Right cardiac atrium (tissue), 5 donors: ENCODE measurements at regions of chr9 and their contacts with region 1.

Region 1: DNA sequence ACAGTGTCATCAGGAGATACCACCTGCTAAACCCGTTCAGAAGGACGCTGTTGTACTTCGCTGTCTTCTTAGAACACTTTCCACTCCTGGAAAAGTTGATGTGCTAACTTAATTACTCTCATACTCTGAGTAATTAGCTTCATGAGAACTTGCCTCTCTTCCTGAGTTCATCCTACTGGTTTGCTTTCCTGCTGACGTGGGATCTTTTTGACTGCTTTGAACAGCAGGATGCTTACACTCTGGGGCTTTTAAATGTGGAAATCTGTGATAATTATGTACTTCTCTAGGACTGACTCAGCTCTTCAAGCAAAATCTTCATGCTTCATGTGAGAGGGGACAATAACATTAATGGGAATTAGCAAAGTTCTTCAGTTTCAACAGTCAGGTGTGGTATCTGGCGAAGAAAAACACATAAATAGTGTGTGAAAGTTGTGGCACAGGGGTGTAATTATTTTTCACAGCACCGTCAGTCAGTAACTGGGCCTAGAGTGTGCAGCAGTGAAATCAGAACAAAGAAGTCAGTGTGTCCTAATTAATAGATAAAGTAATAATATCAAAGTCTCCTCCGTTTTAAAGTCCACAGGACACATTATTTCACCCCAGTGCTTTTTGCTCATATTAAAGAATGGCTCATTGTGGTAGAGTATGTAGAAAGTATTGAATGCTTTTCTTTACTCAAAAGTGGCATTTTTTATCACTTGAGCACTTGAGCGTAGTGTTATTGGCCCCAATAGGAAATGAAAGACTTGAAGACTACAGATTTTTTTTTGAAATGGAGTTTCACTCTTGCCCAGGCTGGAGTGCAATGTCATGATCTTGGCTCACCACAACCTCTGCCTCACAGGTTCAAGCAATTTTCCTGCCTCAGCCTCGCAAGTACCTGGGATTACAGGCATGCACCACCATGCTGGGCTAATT is 140.9 kb upstream of the DMRT1 start:
- DNase-seq: no peak
- ATAC-seq: no peak
- H3K4me3 ChIP-seq: no peak overlapping the region
- H3K27ac ChIP-seq: no peak overlapping the region
- H3K4me1 ChIP-seq: peaks cover 7% of the 10 kb centered on the region
- H3K27me3 ChIP-seq: no peaks in the 10 kb centered on the region

Region 2: DNA sequence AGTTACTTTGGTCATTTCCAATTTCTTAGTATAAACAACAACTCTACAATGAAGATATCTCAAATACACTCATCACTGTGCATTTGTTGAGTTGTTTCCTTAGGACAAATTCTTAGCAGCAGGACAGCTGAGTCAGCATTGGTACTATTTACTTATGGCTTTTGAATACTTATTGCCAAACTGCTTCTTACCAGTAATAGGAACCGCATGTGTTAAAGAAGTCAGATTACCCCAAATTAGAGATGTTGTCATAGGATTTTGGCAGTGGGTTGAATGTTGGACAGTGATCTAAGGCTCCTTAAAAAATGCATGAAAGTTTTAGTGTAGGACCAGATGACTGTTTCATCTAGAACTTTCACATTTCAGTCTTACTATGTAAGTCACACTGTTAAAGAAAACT is 139.2 kb before region 1 on chr9:
- intact Hi-C with region 1: no loop called
- DNase-seq: no peak
- ATAC-seq: no peak
- H3K4me3 ChIP-seq: no peak overlapping the region
- H3K27ac ChIP-seq: no peak overlapping the region
- H3K4me1 ChIP-seq: no peaks in the 10 kb centered on the region
- H3K27me3 ChIP-seq: no peaks in the 10 kb centered on the region

Region 3: DNA sequence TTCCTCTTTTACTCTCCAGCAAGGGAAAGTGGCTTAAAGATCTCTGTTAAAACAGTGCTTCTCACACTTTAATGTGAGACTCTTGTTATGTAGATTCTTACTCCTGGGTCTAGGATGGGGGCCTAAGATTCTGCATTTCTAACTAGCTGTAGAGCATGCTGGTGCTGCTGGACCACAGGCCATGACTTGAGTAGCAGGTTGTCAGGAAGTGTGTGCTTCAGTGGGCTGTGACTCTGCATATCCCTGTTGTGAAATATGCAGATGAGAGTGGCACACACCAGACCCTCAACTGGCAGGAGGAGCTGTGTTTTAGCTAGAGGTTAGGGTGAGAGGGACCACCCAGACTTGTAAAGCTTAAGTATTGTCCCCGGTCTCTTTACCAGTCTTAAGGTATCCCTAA is 50.3 kb before region 1 on chr9:
- intact Hi-C with region 1: loop called in 1 of 4 experiments (anchors 5 kb)
- DNase-seq: no peak
- ATAC-seq: peak; percentile 39 to 53
- H3K4me3 ChIP-seq: no peak overlapping the region
- H3K27ac ChIP-seq: peak overlapping the region; percentile 94
- H3K4me1 ChIP-seq: peaks cover 10% of the 10 kb centered on the region
- H3K27me3 ChIP-seq: no peaks in the 10 kb centered on the region